Prostate gland (tissue), 2 donors: ENCODE measurements at regions of chr5 and their contacts with region 1.

Region 1: DNA sequence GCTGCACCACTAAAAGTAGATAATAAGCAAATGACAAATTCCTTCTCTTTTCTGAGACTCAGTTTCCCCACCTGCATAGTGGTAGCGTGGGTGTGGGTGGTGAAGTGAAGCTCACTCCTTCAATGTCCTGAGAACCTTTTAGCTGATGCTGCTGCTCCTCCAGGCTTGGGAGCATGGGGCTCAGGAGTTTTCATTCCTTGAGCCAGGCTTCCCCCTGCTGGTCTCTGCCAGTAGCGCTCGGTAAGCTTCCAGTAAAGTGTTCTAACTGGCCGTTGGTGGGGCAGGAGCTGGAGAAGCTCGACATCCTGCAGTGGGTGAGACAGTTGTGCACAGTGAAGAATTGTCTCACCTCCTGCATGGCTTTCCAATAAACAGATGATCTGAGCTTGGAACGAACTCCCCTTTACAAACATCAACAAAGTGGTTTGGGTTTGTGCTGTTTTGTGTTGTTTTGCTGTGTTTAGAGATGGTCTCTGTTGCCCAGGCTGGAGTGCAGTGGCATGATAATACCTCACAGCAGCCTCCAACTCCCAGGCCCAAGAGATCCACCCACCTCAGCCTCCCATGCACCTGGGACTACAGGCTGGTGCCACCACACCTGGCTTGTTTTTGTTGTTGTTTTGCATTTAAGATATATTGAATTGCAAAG is 34.6 kb downstream of the SPARC start:
- DNase-seq: peak; percentile 76
- H3K4me3 ChIP-seq: no peak overlapping the region
- H3K27ac ChIP-seq: no peak overlapping the region
- H3K4me1 ChIP-seq: no peaks in the 10 kb centered on the region
- H3K27me3 ChIP-seq: no peaks in the 10 kb centered on the region
- CTCF ChIP-seq: peak; percentile 53 to 90 (median 72)
- POLR2A ChIP-seq: no peak

Region 2: GRCh38 chr5:151499501-151500035 is 152.6 kb before region 1 on chr5:
- intact Hi-C with region 1: loop called (anchors 5 kb)
- DNase-seq: no peak
- H3K4me3 ChIP-seq: no peak overlapping the region
- H3K27ac ChIP-seq: no peak overlapping the region
- H3K4me1 ChIP-seq: no peaks in the 10 kb centered on the region
- H3K27me3 ChIP-seq: no peaks in the 10 kb centered on the region
- CTCF ChIP-seq: no peak
- POLR2A ChIP-seq: no peak

Region 3: GRCh38 chr5:151592855-151593408 is 59.2 kb before region 1 on chr5:
- intact Hi-C with region 1: no loop called
- DNase-seq: no peak
- H3K4me3 ChIP-seq: no peak overlapping the region
- H3K27ac ChIP-seq: no peak overlapping the region
- H3K4me1 ChIP-seq: no peaks in the 10 kb centered on the region
- H3K27me3 ChIP-seq: no peaks in the 10 kb centered on the region
- CTCF ChIP-seq: no peak
- POLR2A ChIP-seq: no peak

Region 4: GRCh38 chr5:151686674-151687407 is 34.7 kb after region 1 on chr5 and contains the start of gene SPARC:
- intact Hi-C with region 1: no loop called
- DNase-seq: peak; percentile 55
- H3K4me3 ChIP-seq: peak within 1 kb of the TSS; percentile 38 to 47
- H3K27ac ChIP-seq: peak within 1 kb of the TSS; percentile 80 to 83
- H3K4me1 ChIP-seq: no peaks in the 10 kb centered on the region
- H3K27me3 ChIP-seq: no peaks in the 10 kb centered on the region
- CTCF ChIP-seq: no peak
- POLR2A ChIP-seq: peak; percentile 59
- total RNA-seq, gene SPARC: 101 to 2,249 TPM

Region 5: DNA sequence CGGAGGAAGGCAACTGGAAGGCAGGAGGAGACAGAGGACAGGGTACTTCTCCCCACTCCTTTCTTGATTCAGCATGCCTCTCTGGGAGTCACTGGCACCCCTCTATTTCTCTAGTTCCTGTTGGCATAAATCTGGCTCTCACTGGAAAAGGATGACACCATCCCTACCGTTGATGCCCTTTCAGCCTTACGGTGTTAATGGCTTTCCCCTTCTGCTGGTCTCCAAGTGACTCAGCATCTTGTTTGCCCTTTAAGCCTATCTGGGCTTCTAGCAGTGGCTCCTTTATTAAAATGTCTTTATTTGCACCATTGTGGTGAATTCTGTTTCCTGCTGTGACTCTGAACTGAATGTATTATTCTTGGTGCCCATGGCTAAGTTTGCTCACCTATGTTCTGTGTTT is 499.8 kb after region 1 on chr5:
- intact Hi-C with region 1: loop called (anchors 10 kb)
- DNase-seq: no peak
- H3K4me3 ChIP-seq: no peak overlapping the region
- H3K27ac ChIP-seq: no peak overlapping the region
- H3K4me1 ChIP-seq: no peaks in the 10 kb centered on the region
- H3K27me3 ChIP-seq: no peaks in the 10 kb centered on the region
- CTCF ChIP-seq: no peak
- POLR2A ChIP-seq: no peak